ENCODE measurements at regions of chr5 and their contacts with region 1.

Region 1: GRCh38 chr5:104213216-104213615 is 650.6 kb upstream of the NUDT12 start:
- DNase-seq: no peak
- ATAC-seq: no peak
- H3K4me3 Mint-ChIP-seq: no peak overlapping the region
- H3K27ac Mint-ChIP-seq: no peak overlapping the region
- H3K4me1 Mint-ChIP-seq: no peaks in the 10 kb centered on the region
- H3K27me3 Mint-ChIP-seq: no peaks in the 10 kb centered on the region

Region 2: GRCh38 chr5:104843822-104844221 is 630.6 kb after region 1 on chr5:
- CTCF ChIA-PET with region 1: no interaction called
- POLR2A ChIA-PET with region 1: no interaction called
- intact Hi-C with region 1: loop called in 1 of 2 experiments (anchors 10 kb)
- DNase-seq: no peak
- ATAC-seq: no peak
- H3K4me3 Mint-ChIP-seq: no peak overlapping the region
- H3K27ac Mint-ChIP-seq: no peak overlapping the region
- H3K4me1 Mint-ChIP-seq: no peaks in the 10 kb centered on the region
- H3K27me3 Mint-ChIP-seq: no peaks in the 10 kb centered on the region